Activated CD4-positive, alpha-beta T cell treated with anti-CD3 and anti-CD28 coated beads for 36 hours (primary cell): ENCODE measurements at regions of chr1 and their contacts with region 1.

Region 1: GRCh38 chr1:65048335-65048734 is 82.0 kb upstream of the JAK1 start:
- DNase-seq: no peak
- ATAC-seq: no peak
- H3K4me3 Mint-ChIP-seq: no peak overlapping the region
- H3K27ac Mint-ChIP-seq: no peak overlapping the region
- H3K4me1 Mint-ChIP-seq: peaks cover 32% of the 10 kb centered on the region
- H3K27me3 Mint-ChIP-seq: no peaks in the 10 kb centered on the region

Region 2: DNA sequence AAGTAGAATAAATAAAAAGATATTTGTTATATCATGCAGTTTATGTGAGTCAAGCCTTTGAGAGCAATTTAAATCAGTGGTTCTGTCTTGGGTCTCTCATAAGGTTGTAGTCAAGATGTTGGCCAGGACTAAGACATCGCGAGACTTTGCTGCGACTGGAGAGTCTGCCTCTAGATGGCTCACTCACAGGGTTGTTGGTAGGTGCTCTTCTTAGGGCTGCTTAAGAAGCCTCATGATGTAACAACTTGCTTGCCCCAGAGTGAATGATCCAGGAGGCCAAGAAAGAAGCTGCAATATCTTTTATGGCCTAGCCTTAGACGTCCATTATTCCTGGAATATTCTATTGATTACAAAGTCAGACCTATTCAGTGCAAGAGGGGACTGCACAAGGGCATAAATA is 651.5 kb before region 1 on chr1:
- CTCF ChIA-PET with region 1: no interaction called
- POLR2A ChIA-PET with region 1: no interaction called
- intact Hi-C with region 1: no loop called
- DNase-seq: peak; percentile 10
- ATAC-seq: no peak
- H3K4me3 Mint-ChIP-seq: no peak overlapping the region
- H3K27ac Mint-ChIP-seq: no peak overlapping the region
- H3K4me1 Mint-ChIP-seq: no peaks in the 10 kb centered on the region
- H3K27me3 Mint-ChIP-seq: peaks cover 6% of the 10 kb centered on the region

Region 3: DNA sequence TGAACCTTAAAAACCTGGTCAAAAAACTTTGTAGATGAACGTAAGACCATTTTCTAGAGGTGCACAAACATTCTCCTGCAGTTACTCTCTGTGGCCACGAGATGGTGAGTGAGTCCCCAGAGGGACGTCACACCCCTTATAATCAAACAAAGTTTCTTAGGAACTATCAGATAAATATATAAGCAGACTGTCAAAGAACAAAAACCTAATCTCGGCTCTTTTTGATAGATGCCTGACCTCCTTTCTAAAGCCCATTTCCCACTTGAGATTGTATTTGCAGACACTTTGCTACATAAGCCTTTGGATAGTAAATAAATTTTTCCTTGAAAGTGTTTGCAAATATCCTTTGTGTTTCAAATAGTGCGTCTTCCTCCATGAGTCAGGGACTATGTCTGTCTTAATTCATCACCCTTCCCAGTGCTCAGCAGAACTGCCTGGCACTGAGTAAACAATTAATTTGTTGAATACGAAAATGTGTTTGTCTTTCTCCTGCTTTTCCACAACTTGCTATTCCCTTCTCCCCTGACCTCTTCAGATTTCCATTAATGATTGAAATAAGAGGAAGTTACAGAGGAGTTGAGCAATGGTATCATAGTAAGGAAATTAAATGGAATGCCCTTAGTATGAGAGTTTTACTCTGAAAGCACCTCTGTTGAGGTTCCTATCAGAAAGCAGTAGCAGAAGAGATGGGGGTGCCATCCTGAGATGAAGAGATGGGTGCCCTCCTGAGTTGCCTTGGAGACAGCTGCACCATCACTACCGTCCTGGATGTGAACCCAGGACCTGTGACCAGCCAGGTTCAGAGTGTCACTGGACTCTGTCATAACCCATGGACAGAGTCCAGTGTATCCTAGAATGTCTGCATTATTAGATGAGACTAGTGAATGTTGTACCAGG is 361.3 kb before region 1 on chr1:
- CTCF ChIA-PET with region 1: no interaction called
- POLR2A ChIA-PET with region 1: no interaction called
- intact Hi-C with region 1: loop called in 1 of 2 experiments (anchors 10 kb)
- DNase-seq: peak; percentile 51
- ATAC-seq: peak; percentile 76
- H3K4me3 Mint-ChIP-seq: no peak overlapping the region
- H3K27ac Mint-ChIP-seq: no peak overlapping the region
- H3K4me1 Mint-ChIP-seq: peaks cover 5% of the 10 kb centered on the region
- H3K27me3 Mint-ChIP-seq: no peaks in the 10 kb centered on the region

Region 4: GRCh38 chr1:64864018-64864940 is 184.1 kb before region 1 on chr1:
- CTCF ChIA-PET with region 1: interaction called, 3 read pairs
- POLR2A ChIA-PET with region 1: no interaction called
- intact Hi-C with region 1: loop called in 1 of 2 experiments (anchors 5 kb)
- DNase-seq: peak; percentile 57
- ATAC-seq: peak; percentile 82
- H3K4me3 Mint-ChIP-seq: no peak overlapping the region
- H3K27ac Mint-ChIP-seq: peak overlapping the region; percentile 49
- H3K4me1 Mint-ChIP-seq: peaks cover 18% of the 10 kb centered on the region
- H3K27me3 Mint-ChIP-seq: no peaks in the 10 kb centered on the region

Region 5: GRCh38 chr1:64877151-64877550 is 171.2 kb before region 1 on chr1:
- CTCF ChIA-PET with region 1: interaction called, 4 read pairs
- POLR2A ChIA-PET with region 1: no interaction called
- intact Hi-C with region 1: loop called in 1 of 2 experiments (anchors 5 kb)
- DNase-seq: peak; percentile 43
- ATAC-seq: peak; percentile 88
- H3K4me3 Mint-ChIP-seq: peak overlapping the region; percentile 4
- H3K27ac Mint-ChIP-seq: peak overlapping the region; percentile 35
- H3K4me1 Mint-ChIP-seq: peaks cover 60% of the 10 kb centered on the region
- H3K27me3 Mint-ChIP-seq: no peaks in the 10 kb centered on the region